SK-N-SH (cell line): ENCODE measurements at regions of chr20 and their contacts with region 1.

Region 1: DNA sequence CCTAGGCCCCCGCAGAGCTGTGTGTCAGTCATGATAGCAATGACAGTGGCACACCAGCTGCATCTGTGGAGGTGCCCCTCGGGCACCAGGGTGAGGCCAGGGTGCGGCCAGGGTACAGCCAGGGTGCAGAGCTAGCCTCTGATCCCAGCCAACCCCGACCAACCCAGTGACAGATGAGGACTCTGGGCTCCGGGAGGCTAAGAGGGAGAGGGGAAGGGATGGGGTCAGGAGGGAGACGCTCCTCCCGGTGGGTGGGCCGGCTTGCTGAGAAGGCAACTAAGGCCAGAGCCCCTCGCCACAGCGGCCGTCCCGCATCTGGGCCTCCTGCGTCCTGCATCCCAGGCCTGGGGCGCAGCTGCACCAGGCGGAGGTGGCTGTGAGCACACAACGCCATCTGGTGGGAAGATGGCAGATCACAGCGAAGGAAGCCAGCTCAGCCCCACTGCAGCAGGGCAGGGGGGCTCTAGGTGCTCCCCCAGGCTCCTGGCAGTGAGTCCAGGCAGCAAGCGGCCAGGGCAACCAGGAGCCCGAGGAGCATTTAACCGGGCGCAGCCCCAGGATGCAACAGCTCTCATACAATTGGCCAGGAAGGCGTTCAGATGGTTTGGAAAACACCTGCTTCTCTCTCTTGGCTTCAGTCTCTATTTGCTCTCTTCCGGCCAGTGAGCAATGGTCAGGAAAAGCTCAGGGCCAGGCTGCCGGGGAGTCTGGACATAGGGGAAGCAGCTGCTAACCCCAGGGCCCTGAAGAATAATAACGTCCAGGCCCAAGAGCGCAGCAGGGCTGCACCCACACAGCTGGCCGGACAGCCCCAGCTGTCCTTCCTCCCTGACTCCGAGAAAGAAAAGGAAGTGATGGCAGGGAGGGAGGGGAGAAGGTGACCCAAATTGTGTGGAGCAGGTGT is 169.4 kb downstream of the TAF4 start:
- DNase-seq: peak; percentile 91
- H3K4me3 ChIP-seq: no peak overlapping the region; a peak in 1 of 4 replicates
- H3K27ac ChIP-seq: no peak overlapping the region
- H3K4me1 ChIP-seq: no peaks in the 10 kb centered on the region; a peak in 1 of 4 replicates
- H3K27me3 ChIP-seq: no peaks in the 10 kb centered on the region
- CTCF ChIP-seq: peak; percentile 38
- EP300 ChIP-seq: no peak
- RAD21 ChIP-seq: peak; percentile 77

Region 2: DNA sequence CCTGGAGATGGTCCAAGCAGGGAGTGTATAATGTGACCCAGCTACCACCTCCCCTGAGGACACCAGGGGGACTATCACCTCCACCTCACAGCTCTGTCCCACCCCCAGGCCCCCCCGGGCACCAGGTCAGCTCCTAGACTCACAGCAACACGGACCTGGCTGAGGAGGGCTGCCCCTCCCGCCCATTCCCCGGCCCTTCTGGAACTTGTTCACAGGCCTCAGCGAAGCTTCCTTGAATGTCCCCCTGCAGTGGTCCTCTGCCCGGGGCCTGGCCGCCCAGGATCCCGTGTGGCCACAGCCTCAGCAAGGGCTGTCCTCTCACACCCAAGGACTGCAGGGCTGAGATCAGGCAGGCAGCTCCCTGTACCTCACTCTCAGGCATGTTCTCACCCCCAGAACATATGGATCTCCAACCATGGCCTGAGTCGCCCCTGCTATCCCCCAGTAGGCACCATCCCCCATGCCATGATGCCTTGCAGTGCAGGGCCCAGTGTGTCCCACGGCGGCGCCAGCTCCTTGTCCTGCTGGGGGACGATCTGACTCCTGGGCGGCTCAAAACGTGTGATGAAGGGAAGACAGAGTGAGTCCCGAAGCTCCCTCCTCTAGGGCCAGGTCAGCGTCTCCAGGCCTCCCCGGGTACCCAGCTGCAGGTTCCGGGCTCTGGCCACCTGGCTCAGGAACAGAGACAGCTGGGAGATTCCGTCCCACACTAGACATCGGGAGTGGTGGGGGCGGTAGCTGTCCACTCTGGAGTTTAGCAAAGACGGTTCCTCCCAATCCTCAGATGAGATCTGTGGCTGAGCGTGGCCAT is 11.0 kb after region 1 on chr20:
- CTCF ChIA-PET with region 1: interaction called, 40 read pairs
- POLR2A ChIA-PET with region 1: no interaction called
- DNase-seq: no peak
- H3K4me3 ChIP-seq: no peak overlapping the region
- H3K27ac ChIP-seq: no peak overlapping the region
- H3K4me1 ChIP-seq: no peaks in the 10 kb centered on the region
- H3K27me3 ChIP-seq: no peaks in the 10 kb centered on the region
- CTCF ChIP-seq: no peak
- EP300 ChIP-seq: no peak
- RAD21 ChIP-seq: no peak

Region 3: DNA sequence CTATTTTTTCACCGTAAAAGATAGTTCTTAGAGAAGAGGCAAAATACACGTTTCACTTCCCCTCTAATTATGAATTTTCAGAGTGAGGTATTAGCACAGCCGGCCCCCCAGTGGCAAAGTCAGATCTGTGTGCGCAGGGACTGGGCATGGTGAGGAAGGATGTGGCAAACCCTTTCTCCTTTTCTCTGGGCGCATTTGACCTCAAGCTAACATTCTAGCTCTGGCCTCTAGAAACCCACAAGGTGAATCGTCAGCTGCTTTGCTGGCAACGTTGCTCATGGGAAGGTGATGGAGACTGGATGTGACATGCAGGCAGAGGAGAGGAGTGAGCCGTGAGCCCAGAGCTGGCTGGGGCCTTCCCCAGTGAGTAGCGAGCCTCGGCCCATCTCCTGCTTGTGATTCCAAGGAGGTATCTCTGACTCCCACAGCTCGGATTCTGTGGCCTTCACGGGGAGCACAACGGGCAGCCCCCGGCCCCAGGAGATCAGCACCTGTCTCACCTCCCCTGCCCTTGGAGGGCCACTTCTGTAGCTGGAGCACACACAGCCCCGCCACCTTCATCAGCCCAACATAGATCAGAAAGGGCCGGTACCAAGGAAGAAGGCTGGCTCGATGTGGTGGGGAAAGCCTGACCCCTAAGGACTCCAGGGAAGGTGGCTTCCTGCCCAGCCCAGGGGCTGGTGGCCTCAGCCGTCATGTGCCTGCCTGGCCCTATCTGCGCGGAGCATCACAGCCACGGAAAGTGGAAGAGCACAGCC is 16.5 kb after region 1 on chr20:
- CTCF ChIA-PET with region 1: interaction called, 40 read pairs
- POLR2A ChIA-PET with region 1: no interaction called
- DNase-seq: no peak
- H3K4me3 ChIP-seq: no peak overlapping the region
- H3K27ac ChIP-seq: no peak overlapping the region
- H3K4me1 ChIP-seq: no peaks in the 10 kb centered on the region
- H3K27me3 ChIP-seq: no peaks in the 10 kb centered on the region
- CTCF ChIP-seq: no peak
- EP300 ChIP-seq: no peak
- RAD21 ChIP-seq: no peak

Region 4: GRCh38 chr20:61976644-61977490 is 80.6 kb after region 1 on chr20:
- CTCF ChIA-PET with region 1: no interaction called
- POLR2A ChIA-PET with region 1: no interaction called
- DNase-seq: no peak
- H3K4me3 ChIP-seq: no peak overlapping the region
- H3K27ac ChIP-seq: no peak overlapping the region
- H3K4me1 ChIP-seq: no peaks in the 10 kb centered on the region; a peak in 1 of 4 replicates
- H3K27me3 ChIP-seq: no peaks in the 10 kb centered on the region
- CTCF ChIP-seq: no peak
- EP300 ChIP-seq: no peak
- RAD21 ChIP-seq: no peak